ENCODE measurements at regions of chr22 and their contacts with region 1.

Region 1: GRCh38 chr22:45994491-45995404 is 17.8 kb upstream of the WNT7B start:
- DNase-seq: peak in 1 of 2 experiments; percentile 100
- H3K4me3 ChIP-seq: no peak overlapping the region
- H3K27ac ChIP-seq: no peak overlapping the region
- H3K4me1 ChIP-seq: peaks cover 0 to 3% (median 0%) of the 10 kb centered on the region in 4 experiments; a peak in 2 of 7 replicates
- H3K27me3 ChIP-seq: no peaks in the 10 kb centered on the region; a peak in 2 of 7 replicates
- CTCF ChIP-seq: peak; percentile 94 to 98 (median 97)
- EP300 ChIP-seq: no peak
- POLR2A ChIP-seq: no peak
- RAD21 ChIP-seq: peak; percentile 98 to 99

Region 2: DNA sequence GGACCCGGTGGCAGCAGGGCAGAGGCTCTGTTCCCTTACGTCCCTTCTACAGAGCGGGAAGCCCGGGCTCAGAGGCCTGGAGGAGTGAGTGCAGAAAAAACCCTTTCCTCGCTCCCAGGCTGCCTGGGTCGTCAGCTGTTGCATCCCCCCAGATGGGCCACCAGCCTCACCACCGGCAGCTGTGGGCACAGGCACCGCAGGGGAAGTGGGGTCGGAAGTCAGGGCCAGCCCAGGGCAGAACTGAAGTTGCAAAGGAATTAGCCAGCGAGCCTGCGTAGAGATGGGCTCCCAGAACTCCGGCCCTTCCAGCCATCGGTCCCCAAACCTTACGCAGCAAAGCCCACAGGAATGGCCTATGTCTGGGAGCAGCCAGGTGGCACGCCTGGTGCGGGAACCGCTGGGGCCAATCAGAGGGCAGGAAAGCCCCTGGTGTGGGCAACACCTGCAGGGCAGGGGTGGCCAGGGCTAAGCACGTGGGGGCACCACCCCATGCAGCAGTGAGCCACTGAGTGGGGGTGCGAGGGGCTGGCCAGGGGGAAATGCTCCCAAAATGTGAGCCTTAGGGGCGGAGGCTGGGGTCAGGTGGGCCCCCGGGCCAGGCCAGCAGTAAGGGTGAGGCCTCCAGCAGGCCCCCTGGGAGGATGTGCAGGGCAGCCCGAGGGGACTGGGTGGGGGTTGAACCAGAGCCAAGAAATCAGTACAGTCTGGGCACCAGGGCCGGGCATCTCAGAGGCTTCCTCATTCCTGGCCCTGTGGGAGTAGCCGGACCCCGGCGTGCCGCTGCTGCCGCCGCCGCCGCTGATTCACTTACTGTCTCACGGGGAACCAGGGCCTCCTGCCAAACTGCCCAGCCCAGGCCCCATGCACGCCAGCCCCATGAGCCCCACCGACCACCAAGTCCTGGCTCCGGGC is 76.0 kb before region 1 on chr22:
- CTCF ChIA-PET with region 1: no interaction called
- POLR2A ChIA-PET with region 1: no interaction called
- DNase-seq: no peak
- H3K4me3 ChIP-seq: no peak overlapping the region
- H3K27ac ChIP-seq: no peak overlapping the region
- H3K4me1 ChIP-seq: no peaks in the 10 kb centered on the region; a peak in 1 of 7 replicates
- H3K27me3 ChIP-seq: no peaks in the 10 kb centered on the region
- CTCF ChIP-seq: no peak
- EP300 ChIP-seq: no peak
- POLR2A ChIP-seq: no peak
- RAD21 ChIP-seq: no peak

Region 3: GRCh38 chr22:45930318-45930717 is 64.4 kb before region 1 on chr22:
- CTCF ChIA-PET with region 1: no interaction called
- POLR2A ChIA-PET with region 1: no interaction called
- DNase-seq: no peak
- H3K4me3 ChIP-seq: no peak overlapping the region
- H3K27ac ChIP-seq: no peak overlapping the region
- H3K4me1 ChIP-seq: no peaks in the 10 kb centered on the region
- H3K27me3 ChIP-seq: no peaks in the 10 kb centered on the region
- CTCF ChIP-seq: no peak
- EP300 ChIP-seq: no peak
- POLR2A ChIP-seq: no peak
- RAD21 ChIP-seq: no peak

Region 4: GRCh38 chr22:45942787-45943493 is 51.8 kb before region 1 on chr22:
- CTCF ChIA-PET with region 1: no interaction called
- POLR2A ChIA-PET with region 1: no interaction called
- DNase-seq: no peak
- H3K4me3 ChIP-seq: no peak overlapping the region
- H3K27ac ChIP-seq: no peak overlapping the region
- H3K4me1 ChIP-seq: no peaks in the 10 kb centered on the region
- H3K27me3 ChIP-seq: no peaks in the 10 kb centered on the region; a peak in 1 of 7 replicates
- CTCF ChIP-seq: no peak
- EP300 ChIP-seq: no peak
- POLR2A ChIP-seq: no peak
- RAD21 ChIP-seq: no peak

Region 5: DNA sequence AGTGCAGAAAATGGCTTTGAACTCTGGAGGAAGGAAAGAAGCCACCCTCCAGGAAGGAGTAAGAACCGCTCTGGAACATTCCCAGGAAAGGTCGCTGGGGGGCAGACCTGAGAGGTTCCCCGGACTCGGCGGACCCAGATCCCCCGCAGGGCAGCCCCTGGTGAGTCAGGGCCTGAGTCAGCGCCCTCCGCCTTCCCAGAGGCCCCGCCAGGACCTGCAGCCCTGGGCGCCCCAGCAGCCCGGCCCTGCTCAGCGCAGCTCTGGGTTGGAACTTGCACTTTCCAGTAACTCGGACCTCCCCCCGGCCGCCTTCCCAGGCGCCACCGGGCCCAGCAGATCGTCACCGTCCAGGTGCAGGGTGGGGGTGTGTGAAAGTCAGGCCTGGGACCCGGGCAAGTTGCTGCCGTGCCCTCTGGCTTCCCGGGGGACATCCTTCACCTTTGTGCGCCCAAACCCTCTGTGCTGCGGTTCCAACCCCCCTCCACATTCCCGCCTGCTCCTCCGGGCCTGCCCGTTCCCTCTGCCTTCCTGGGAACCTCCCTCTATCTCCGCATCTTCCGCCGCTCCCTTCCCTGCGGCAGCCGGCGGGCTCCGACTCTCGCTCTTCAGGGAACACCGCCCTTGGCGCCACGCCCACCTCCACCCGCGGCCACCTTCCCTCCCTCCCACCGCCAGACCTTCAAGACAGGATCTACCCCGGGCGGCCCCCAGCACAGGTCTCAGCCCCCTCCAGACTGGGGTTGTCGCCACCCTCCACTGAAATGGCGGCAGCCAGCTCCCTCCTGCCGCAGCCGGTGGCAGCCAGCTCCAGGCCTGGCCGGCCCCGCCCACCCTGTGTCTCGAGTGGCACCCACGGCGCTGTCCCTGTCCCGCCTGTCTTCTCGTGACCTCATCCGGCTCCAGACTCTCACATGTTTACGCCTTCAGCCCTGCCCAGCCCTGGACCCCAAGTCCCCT is 19.0 kb after region 1 on chr22:
- CTCF ChIA-PET with region 1: interaction called, 90 read pairs
- POLR2A ChIA-PET with region 1: interaction called, 4 read pairs
- DNase-seq: peak; percentile 67 to 95
- H3K4me3 ChIP-seq: peak overlapping the region; percentile 55 to 77 (median 68)
- H3K27ac ChIP-seq: peak overlapping the region; percentile 35; the same call in 1 of the 2 replicates
- H3K4me1 ChIP-seq: peaks cover 0 to 13% (median 4%) of the 10 kb centered on the region in 4 experiments; a peak in 6 of 7 replicates
- H3K27me3 ChIP-seq: no peaks in the 10 kb centered on the region
- CTCF ChIP-seq: peak; percentile 57 to 72 (median 63)
- EP300 ChIP-seq: no peak
- POLR2A ChIP-seq: peak in 1 of 2 experiments; percentile 76; a peak in 2 of 3 replicates
- RAD21 ChIP-seq: peak; percentile 29 to 58

Region 6: DNA sequence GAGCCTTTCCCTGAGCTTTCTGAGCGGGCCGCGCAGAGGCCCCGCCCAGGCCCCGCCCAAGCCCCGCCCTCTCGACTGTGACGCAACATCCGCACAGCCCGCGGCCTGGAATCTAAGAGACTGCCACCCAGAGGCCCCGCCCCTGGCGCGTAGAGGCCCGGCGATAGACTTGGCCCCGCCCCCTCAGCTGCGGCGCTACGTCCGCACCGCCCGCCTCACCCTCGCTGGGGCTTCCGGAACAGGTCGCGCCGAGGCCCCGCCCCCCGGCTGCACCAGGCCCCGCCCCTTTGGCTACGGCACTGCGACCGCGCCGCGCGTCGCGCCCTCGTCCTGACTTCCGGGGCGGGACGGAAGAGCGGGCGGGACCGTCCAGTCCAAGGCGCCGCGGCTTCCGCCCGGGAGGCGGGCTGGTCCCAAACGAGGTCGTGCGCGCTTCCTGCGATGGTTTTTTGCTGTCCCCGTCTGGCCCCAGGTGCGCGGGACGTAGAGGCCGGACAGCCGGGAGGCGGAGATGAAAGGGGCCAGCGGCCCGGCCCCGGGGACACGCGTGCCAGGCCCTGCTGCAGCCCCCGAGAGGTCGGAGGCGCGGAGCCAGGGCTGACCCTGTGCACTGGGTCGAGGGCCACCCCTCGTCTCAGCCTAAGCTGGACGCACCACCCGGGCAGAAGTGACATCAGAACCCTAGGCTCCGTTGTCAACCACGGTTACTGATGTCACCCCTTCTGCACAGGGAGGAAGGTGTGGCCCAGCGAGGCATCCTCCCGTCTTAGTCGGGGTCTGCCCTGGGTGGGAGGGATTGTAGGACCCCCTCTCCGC is 41.2 kb after region 1 on chr22:
- CTCF ChIA-PET with region 1: interaction called, 10 read pairs
- POLR2A ChIA-PET with region 1: no interaction called
- DNase-seq: peak; percentile 97 to 100
- H3K4me3 ChIP-seq: peak overlapping the region; percentile 72 to 86 (median 79)
- H3K27ac ChIP-seq: 0 out of 2 replicates have a peak overlapping the region, but pooled peaks have one; percentile 31
- H3K4me1 ChIP-seq: peaks cover 0 to 23% (median 11%) of the 10 kb centered on the region in 4 experiments; a peak in 6 of 7 replicates
- H3K27me3 ChIP-seq: no peaks in the 10 kb centered on the region
- CTCF ChIP-seq: no peak
- EP300 ChIP-seq: no peak
- POLR2A ChIP-seq: peak in 1 of 2 experiments; percentile 64; a peak in 1 of 3 replicates
- RAD21 ChIP-seq: no peak

Region 7: GRCh38 chr22:46110215-46110614 is 115.5 kb after region 1 on chr22:
- CTCF ChIA-PET with region 1: interaction called, 111 read pairs
- POLR2A ChIA-PET with region 1: no interaction called
- DNase-seq: no peak
- H3K4me3 ChIP-seq: no peak overlapping the region
- H3K27ac ChIP-seq: no peak overlapping the region
- H3K4me1 ChIP-seq: peaks cover 0 to 16% (median 10%) of the 10 kb centered on the region in 4 experiments; a peak in 6 of 7 replicates
- H3K27me3 ChIP-seq: no peaks in the 10 kb centered on the region
- CTCF ChIP-seq: no peak
- EP300 ChIP-seq: no peak
- POLR2A ChIP-seq: no peak
- RAD21 ChIP-seq: no peak

Region 8: GRCh38 chr22:46122511-46122971 is 127.8 kb after region 1 on chr22:
- CTCF ChIA-PET with region 1: interaction called, 111 read pairs
- POLR2A ChIA-PET with region 1: interaction called, 4 read pairs
- DNase-seq: peak in 1 of 2 experiments; percentile 90
- H3K4me3 ChIP-seq: no peak overlapping the region
- H3K27ac ChIP-seq: no peak overlapping the region
- H3K4me1 ChIP-seq: peaks cover 0 to 3% (median 0%) of the 10 kb centered on the region in 4 experiments; a peak in 3 of 7 replicates
- H3K27me3 ChIP-seq: peaks cover 0 to 6% (median 0%) of the 10 kb centered on the region in 4 experiments; a peak in 2 of 7 replicates
- CTCF ChIP-seq: peak; percentile 84 to 93 (median 86)
- EP300 ChIP-seq: no peak
- POLR2A ChIP-seq: no peak
- RAD21 ChIP-seq: peak; percentile 81 to 82

Measured in H1 (cell line).